Heart left ventricle (tissue), 16 donors: ENCODE measurements at regions of chr15 and their contacts with region 1.

Region 1: DNA sequence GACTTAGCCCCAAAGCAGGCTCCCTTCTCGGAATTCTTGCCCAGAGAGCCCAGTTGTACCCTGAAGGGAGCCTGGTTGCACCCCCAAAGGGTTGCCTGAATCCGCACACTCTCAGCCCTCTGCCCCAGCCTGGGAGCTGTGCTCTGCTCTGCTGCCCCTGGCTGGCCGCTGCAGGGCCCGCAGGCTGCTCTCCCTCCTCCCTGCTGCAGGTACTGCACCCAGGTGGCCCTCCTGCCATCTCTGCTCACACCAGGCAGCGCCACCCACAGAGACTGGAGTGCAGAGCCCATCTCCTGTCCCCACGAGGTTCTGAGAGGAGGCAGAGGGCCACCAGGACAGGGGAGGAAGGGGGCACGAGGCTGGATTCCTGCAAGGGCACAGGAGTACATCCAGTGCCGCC is 134.2 kb upstream of the NSMCE3 start:
- DNase-seq: no peak
- ATAC-seq: peak in 1 of 4 donors; percentile 34
- H3K4me3 ChIP-seq: no peak overlapping the region
- H3K27ac ChIP-seq: no peak overlapping the region
- H3K4me1 ChIP-seq: no peaks in the 10 kb centered on the region
- H3K27me3 ChIP-seq: peaks cover 0 to 12% (median 0%) of the 10 kb centered on the region in 9 donors
- CTCF ChIP-seq: no peak
- POLR2A ChIP-seq: no peak

Region 2: GRCh38 chr15:29269485-29270168 is 134.1 kb before region 1 on chr15 and contains the start of gene NSMCE3:
- intact Hi-C with region 1: no loop called
- DNase-seq: peak; percentile 90 to 96 (median 92)
- ATAC-seq: peak; percentile 96 to 100 (median 99)
- H3K4me3 ChIP-seq: peak within 1 kb of the TSS; percentile 69 to 97 (median 82)
- H3K27ac ChIP-seq: peak within 1 kb of the TSS; percentile 79 to 97 (median 92)
- H3K4me1 ChIP-seq: peaks cover 0 to 35% (median 22%) of the 10 kb centered on the region in 12 donors
- H3K27me3 ChIP-seq: no peaks in the 10 kb centered on the region
- CTCF ChIP-seq: no peak
- POLR2A ChIP-seq: peak; percentile 68 to 91
- total RNA-seq, gene NSMCE3: 6.0 to 10.2 (median 7.3) TPM

Region 3: GRCh38 chr15:29392358-29392757 is 11.4 kb before region 1 on chr15:
- intact Hi-C with region 1: loop called in 1 of 10 experiments (anchors 2 kb)
- DNase-seq: no peak
- ATAC-seq: no peak
- H3K4me3 ChIP-seq: no peak overlapping the region
- H3K27ac ChIP-seq: no peak overlapping the region
- H3K4me1 ChIP-seq: no peaks in the 10 kb centered on the region
- H3K27me3 ChIP-seq: no peaks in the 10 kb centered on the region
- CTCF ChIP-seq: no peak
- POLR2A ChIP-seq: no peak